ENCODE measurements at regions of chr1 and their contacts with region 1.

Region 1: DNA sequence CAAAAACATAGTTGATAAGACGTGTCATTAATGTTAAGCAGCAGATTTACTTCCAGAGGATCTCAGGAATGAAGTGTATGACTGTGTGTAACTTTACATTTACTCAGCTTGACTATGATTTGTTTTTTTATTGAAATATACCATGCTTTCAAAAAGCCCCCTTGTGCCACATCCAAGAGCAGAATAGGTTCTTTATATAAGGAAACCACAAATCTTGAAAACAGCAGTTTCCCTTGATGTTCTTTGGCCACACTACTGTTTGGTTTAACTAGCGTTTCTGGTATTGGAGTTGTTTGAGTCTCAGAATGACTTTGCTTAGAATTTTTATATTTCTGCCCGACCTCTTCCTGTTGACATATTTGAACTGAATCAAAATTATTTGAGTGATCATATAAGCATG is 25.0 kb downstream of the LRRC8C start:
- DNase-seq: peak in 4 of 14 experiments; percentile 16 to 86 (median 84)
- ATAC-seq: peak; percentile 76
- H3K4me3 ChIP-seq: peak overlapping the region; percentile 11
- H3K4me3 Mint-ChIP-seq: peak overlapping the region; percentile 70
- H3K27ac ChIP-seq: peak overlapping the region; percentile 62 to 63
- H3K27ac Mint-ChIP-seq: peak overlapping the region; percentile 88
- H3K4me1 ChIP-seq: peaks cover 48% of the 10 kb centered on the region
- H3K4me1 Mint-ChIP-seq: peaks cover 96% of the 10 kb centered on the region
- H3K27me3 ChIP-seq: no peaks in the 10 kb centered on the region
- H3K27me3 Mint-ChIP-seq: no peaks in the 10 kb centered on the region
- CTCF ChIP-seq: no peak

Region 2: DNA sequence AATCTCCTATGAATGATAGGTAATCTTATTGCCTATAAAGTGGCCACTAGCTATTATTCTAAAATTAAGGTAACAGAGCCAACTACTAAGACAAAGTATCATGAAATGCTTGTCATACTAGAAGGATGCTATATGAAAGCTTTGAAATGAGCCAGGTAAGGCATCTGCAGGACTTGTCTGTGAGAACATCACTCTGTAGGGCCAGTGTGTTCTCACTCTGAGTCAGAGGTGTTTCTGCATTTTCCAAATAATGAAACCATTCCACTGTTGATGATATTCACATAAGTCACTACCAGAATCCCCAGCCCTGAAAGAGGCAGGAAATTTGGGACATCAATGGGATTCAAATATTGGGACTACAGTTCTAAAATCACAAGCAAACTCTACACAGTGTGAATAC is 359.4 kb before region 1 on chr1:
- CTCF ChIA-PET with region 1: no interaction called
- POLR2A ChIA-PET with region 1: no interaction called
- intact Hi-C with region 1: no loop called
- DNase-seq: no peak
- ATAC-seq: no peak
- H3K4me3 ChIP-seq: no peak overlapping the region
- H3K4me3 Mint-ChIP-seq: no peak overlapping the region
- H3K27ac ChIP-seq: no peak overlapping the region
- H3K27ac Mint-ChIP-seq: no peak overlapping the region
- H3K4me1 ChIP-seq: peaks cover 19% of the 10 kb centered on the region
- H3K4me1 Mint-ChIP-seq: peaks cover 45% of the 10 kb centered on the region
- H3K27me3 ChIP-seq: no peaks in the 10 kb centered on the region
- H3K27me3 Mint-ChIP-seq: no peaks in the 10 kb centered on the region
- CTCF ChIP-seq: no peak

Region 3: DNA sequence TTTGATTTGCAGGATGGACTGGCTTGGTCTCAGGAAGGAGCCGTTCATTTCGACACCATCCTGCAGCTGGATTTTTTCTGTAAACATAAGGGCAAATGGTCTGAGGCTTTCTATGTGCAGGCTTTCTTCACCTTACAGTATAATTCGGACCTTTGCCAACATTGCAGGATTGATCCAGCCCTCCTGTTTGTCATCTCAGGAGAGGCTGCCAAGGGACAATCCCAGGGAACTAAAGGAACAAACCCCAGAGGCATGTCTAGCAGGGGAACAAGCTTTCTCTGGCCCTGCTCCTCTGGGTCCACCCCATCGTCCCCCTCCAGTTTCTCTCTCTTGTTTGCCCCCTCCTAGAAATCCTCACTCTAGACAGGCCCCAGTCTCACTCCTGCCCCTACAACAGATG is 318.8 kb before region 1 on chr1:
- CTCF ChIA-PET with region 1: no interaction called
- POLR2A ChIA-PET with region 1: no interaction called
- intact Hi-C with region 1: no loop called
- DNase-seq: no peak
- ATAC-seq: no peak
- H3K4me3 ChIP-seq: no peak overlapping the region
- H3K4me3 Mint-ChIP-seq: no peak overlapping the region
- H3K27ac ChIP-seq: no peak overlapping the region
- H3K27ac Mint-ChIP-seq: no peak overlapping the region
- H3K4me1 ChIP-seq: no peaks in the 10 kb centered on the region
- H3K4me1 Mint-ChIP-seq: no peaks in the 10 kb centered on the region
- H3K27me3 ChIP-seq: no peaks in the 10 kb centered on the region
- H3K27me3 Mint-ChIP-seq: no peaks in the 10 kb centered on the region
- CTCF ChIP-seq: no peak

Region 4: DNA sequence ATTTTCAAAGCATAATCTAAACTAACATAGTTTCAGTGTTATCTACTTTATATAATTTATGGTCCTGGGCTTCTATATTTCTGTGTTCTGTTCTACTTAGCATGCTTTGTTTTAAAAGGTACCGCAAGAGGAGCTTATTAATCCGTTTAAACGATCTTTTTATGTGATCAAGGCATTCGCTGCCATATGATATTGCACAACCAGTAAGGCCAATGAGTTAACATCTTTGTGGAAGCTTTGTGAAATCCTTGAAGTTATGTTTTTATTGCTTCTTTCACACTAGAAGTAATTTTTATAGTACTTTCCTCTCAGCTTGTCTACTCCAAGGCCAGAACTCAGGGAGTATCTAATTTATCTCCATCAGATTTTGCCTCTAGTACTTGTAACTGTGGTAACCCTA is 16.1 kb before region 1 on chr1:
- CTCF ChIA-PET with region 1: interaction called, 6 read pairs
- POLR2A ChIA-PET with region 1: interaction called, 139 read pairs
- intact Hi-C with region 1: loop called (anchors 2 kb)
- DNase-seq: no peak
- ATAC-seq: no peak
- H3K4me3 ChIP-seq: no peak overlapping the region
- H3K4me3 Mint-ChIP-seq: no peak overlapping the region
- H3K27ac ChIP-seq: no peak overlapping the region
- H3K27ac Mint-ChIP-seq: peak overlapping the region; percentile 60
- H3K4me1 ChIP-seq: peaks cover 26% of the 10 kb centered on the region
- H3K4me1 Mint-ChIP-seq: peaks cover 76% of the 10 kb centered on the region
- H3K27me3 ChIP-seq: no peaks in the 10 kb centered on the region
- H3K27me3 Mint-ChIP-seq: no peaks in the 10 kb centered on the region
- CTCF ChIP-seq: no peak

Region 5: DNA sequence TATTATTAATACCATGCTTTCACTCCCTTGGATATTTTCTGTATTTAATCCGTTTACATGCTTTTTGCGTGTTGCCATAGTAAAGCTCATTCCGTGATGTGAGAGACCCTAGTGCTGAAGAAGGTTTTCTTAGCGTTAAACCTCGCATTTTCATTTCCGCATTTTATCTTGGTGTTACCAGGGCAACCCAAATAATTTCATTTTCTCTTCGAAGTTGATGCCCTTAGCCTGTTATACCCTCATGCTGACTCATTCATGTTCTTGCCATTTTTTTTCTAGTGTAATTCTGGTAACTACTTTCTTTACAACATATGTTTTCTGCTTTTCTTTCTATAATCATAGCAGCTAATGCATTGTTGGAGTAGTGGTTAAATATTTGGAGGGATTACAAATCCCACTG is 12.3 kb after region 1 on chr1:
- CTCF ChIA-PET with region 1: interaction called, 3 read pairs
- POLR2A ChIA-PET with region 1: interaction called, 28 read pairs
- intact Hi-C with region 1: no loop called
- DNase-seq: peak in 3 of 14 experiments; percentile 79 to 84 (median 81)
- ATAC-seq: peak; percentile 86
- H3K4me3 ChIP-seq: no peak overlapping the region
- H3K4me3 Mint-ChIP-seq: peak overlapping the region; percentile 62
- H3K27ac ChIP-seq: no peak overlapping the region
- H3K27ac Mint-ChIP-seq: peak overlapping the region; percentile 45
- H3K4me1 ChIP-seq: peaks cover 39% of the 10 kb centered on the region
- H3K4me1 Mint-ChIP-seq: peaks cover 98% of the 10 kb centered on the region
- H3K27me3 ChIP-seq: no peaks in the 10 kb centered on the region
- H3K27me3 Mint-ChIP-seq: no peaks in the 10 kb centered on the region
- CTCF ChIP-seq: no peak

Region 6: DNA sequence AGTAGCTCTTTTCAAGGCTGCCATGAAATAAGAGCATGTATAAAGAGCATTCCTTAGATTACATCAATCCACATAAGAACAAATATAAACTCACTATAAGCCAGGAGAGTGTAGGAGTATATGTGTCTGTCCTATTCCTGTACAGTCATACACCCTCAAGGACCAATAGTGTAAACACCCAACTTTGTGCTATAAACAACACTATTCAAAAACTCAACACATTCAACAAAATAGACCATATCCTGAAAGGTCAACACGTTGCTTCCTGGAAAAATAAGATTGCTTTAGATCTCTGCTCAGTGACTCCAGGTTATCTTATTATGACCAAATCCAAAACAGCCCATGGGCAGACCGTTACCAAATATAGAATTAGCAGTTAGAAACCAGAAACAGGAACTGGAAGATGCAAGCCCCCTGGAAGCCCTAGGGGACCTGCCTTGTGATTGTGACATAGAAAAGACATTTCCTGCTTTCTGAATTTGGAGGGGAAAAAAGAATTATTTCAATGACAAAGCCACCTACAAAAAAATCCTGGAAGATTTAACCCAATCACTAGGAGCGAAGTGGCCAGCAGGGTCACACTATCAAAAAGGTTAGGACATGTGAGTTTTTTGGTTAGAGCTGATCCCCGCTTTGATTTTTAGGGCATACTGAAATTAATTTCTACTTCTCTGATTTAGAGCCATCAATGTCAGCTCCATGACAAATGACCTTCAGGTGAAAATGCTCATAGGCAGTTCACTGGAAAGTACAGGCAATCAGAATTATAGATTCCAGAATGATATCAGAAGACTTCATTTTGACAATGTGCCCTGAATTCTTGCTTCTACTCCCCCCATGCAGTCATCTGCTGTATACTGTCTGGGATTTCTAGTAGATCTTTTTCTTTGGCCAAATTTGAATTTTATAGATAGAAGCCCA is 35.0 kb after region 1 on chr1:
- CTCF ChIA-PET with region 1: interaction called, 3 read pairs
- POLR2A ChIA-PET with region 1: interaction called, 10 read pairs
- intact Hi-C with region 1: loop called in 1 of 2 experiments (anchors 2 kb)
- DNase-seq: peak in 1 of 14 experiments; percentile 17
- ATAC-seq: no peak
- H3K4me3 ChIP-seq: no peak overlapping the region
- H3K4me3 Mint-ChIP-seq: peak overlapping the region; percentile 22
- H3K27ac ChIP-seq: peak overlapping the region; percentile 7 to 31
- H3K27ac Mint-ChIP-seq: peak overlapping the region; percentile 79
- H3K4me1 ChIP-seq: peaks cover 30% of the 10 kb centered on the region
- H3K4me1 Mint-ChIP-seq: peaks cover 86% of the 10 kb centered on the region
- H3K27me3 ChIP-seq: no peaks in the 10 kb centered on the region
- H3K27me3 Mint-ChIP-seq: no peaks in the 10 kb centered on the region
- CTCF ChIP-seq: no peak

Region 7: GRCh38 chr1:91278754-91279153 is 1620.9 kb after region 1 on chr1:
- CTCF ChIA-PET with region 1: no interaction called
- POLR2A ChIA-PET with region 1: no interaction called
- intact Hi-C with region 1: no loop called
- DNase-seq: no peak
- ATAC-seq: no peak
- H3K4me3 ChIP-seq: no peak overlapping the region
- H3K4me3 Mint-ChIP-seq: no peak overlapping the region
- H3K27ac ChIP-seq: no peak overlapping the region
- H3K27ac Mint-ChIP-seq: no peak overlapping the region
- H3K4me1 ChIP-seq: no peaks in the 10 kb centered on the region
- H3K4me1 Mint-ChIP-seq: no peaks in the 10 kb centered on the region
- H3K27me3 ChIP-seq: no peaks in the 10 kb centered on the region
- H3K27me3 Mint-ChIP-seq: peaks cover 12% of the 10 kb centered on the region
- CTCF ChIP-seq: no peak